AG04450 (cell line): ENCODE measurements at regions of chr7 and their contacts with region 1.

Region 1: DNA sequence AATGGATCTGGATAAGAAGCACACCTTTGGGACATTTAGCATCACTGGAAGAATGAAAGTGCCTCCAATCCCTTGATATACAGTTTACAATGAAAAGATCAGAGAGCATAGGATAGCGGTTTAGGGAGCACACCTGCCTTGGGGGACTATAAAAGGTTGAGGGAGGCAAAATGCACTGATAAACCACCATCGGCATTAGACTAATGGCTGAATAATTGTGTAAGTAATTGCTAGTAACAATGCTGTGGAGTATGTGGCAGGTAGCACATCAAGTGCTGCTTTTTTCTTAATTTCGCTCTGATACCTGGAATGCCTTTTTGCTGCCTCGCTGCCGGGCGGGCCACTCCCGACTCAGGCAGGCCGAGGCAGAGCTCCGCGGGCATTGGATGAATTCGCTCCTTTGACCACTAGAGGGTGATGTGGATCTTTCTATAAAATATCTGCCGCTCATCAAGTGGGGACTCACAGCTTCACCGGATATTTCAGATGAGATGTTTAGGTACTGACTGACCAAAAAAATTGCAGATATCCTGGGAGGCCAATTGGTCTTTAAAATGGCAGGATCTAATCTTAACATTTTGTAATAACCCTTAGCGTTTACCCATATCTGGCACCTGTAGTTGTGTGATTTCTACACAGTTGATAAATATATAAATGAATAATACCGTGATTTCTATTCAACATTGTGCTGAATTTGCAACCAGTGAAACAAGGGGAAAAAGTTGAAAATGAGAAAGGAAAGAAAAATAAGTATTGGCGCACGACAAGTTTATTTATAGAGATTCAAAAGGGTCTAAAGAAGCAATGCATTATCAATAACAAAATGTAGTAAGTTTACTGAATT is 116.8 kb upstream of the PRSS1 start:
- DNase-seq: no peak
- H3K4me3 ChIP-seq: no peak overlapping the region
- H3K27ac ChIP-seq: no peak overlapping the region
- H3K27me3 ChIP-seq: peaks cover 2% of the 10 kb centered on the region
- CTCF ChIP-seq: peak; percentile 77

Region 2: GRCh38 chr7:142557971-142558582 is 74.4 kb before region 1 on chr7:
- CTCF ChIA-PET with region 1: interaction called, 10 read pairs
- POLR2A ChIA-PET with region 1: no interaction called
- DNase-seq: no peak
- H3K4me3 ChIP-seq: no peak overlapping the region
- H3K27ac ChIP-seq: no peak overlapping the region
- H3K27me3 ChIP-seq: no peaks in the 10 kb centered on the region
- CTCF ChIP-seq: peak; percentile 65

Region 3: GRCh38 chr7:142603870-142604448 is 28.6 kb before region 1 on chr7:
- CTCF ChIA-PET with region 1: interaction called, 23 read pairs
- POLR2A ChIA-PET with region 1: no interaction called
- DNase-seq: no peak
- H3K4me3 ChIP-seq: no peak overlapping the region; the same call in 1 of the 2 replicates
- H3K27ac ChIP-seq: no peak overlapping the region
- H3K27me3 ChIP-seq: peaks cover 2% of the 10 kb centered on the region
- CTCF ChIP-seq: peak; percentile 87

Region 4: GRCh38 chr7:142611566-142612236 is 20.8 kb before region 1 on chr7:
- CTCF ChIA-PET with region 1: interaction called, 12 read pairs
- POLR2A ChIA-PET with region 1: no interaction called
- DNase-seq: no peak
- H3K4me3 ChIP-seq: no peak overlapping the region
- H3K27ac ChIP-seq: no peak overlapping the region
- H3K27me3 ChIP-seq: peaks cover 2% of the 10 kb centered on the region
- CTCF ChIP-seq: no peak

Region 5: GRCh38 chr7:142645777-142646176 is 13.3 kb after region 1 on chr7:
- CTCF ChIA-PET with region 1: interaction called, 19 read pairs
- POLR2A ChIA-PET with region 1: no interaction called
- DNase-seq: no peak
- H3K4me3 ChIP-seq: no peak overlapping the region
- H3K27ac ChIP-seq: no peak overlapping the region
- H3K27me3 ChIP-seq: peaks cover 2% of the 10 kb centered on the region
- CTCF ChIP-seq: no peak